CD14-positive monocyte (primary cell): ENCODE measurements at regions of chr1 and their contacts with region 1.

Region 1: GRCh38 chr1:66396212-66396890 is 137.6 kb upstream of the SGIP1 start:
- DNase-seq: peak; percentile 78 to 92 (median 89)
- H3K4me3 ChIP-seq: peak overlapping the region in 1 of 3 experiments; percentile 47
- H3K4me3 Mint-ChIP-seq: peak overlapping the region; percentile 51 to 85
- H3K27ac ChIP-seq: peak overlapping the region; percentile 81 to 94
- H3K27ac Mint-ChIP-seq: peak overlapping the region; percentile 92 to 100 (median 99)
- H3K4me1 ChIP-seq: peaks cover 61 to 64% of the 10 kb centered on the region in 2 donors
- H3K4me1 Mint-ChIP-seq: peaks cover 74% of the 10 kb centered on the region
- H3K27me3 ChIP-seq: no peaks in the 10 kb centered on the region
- H3K27me3 Mint-ChIP-seq: no peaks in the 10 kb centered on the region
- CTCF ChIP-seq: no peak

Region 2: DNA sequence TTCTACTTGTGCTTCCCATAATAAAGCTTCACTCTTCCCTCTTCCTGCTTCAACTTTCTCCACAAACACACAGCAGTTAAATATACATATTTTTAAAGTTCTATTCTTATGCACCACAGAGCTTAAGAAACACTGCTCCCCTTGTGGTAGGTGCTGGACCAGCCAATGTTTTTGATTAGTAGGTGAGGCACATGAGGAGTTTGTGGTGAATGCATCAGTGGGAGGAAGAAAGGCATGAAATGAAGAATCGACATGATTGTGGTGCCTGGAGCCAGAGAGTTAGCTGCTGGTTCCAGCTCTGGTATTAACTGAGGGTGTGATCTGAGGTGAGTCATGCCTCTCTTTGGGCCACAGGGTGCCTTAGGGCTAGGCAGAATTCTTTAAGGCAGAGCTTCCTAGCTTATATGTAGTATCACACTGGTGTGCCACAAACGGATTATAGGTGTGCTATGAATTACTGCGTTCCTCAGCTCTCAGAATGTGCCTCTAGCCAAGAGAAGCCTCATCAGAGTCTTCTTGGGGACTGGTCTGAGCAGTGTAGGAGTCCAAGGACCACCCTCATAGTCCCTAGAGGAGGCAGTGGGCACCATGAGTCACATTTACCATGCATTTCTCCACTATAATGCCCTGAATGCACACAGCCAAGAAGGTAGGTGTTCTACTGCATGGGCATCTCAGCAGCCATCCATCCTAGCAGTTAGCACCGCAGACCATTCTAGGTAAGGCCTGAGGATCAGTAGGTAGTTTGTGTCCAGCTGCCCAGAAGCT is 40.2 kb after region 1 on chr1:
- intact Hi-C with region 1: loop called (anchors 2 to 5 kb)
- DNase-seq: peak in 2 of 3 donors; percentile 19 to 60
- H3K4me3 ChIP-seq: no peak overlapping the region
- H3K4me3 Mint-ChIP-seq: no peak overlapping the region
- H3K27ac ChIP-seq: no peak overlapping the region
- H3K27ac Mint-ChIP-seq: peak overlapping the region in 5 of 7 donors; percentile 20 to 76 (median 58)
- H3K4me1 ChIP-seq: peaks cover 31 to 40% of the 10 kb centered on the region in 2 donors
- H3K4me1 Mint-ChIP-seq: peaks cover 37% of the 10 kb centered on the region
- H3K27me3 ChIP-seq: no peaks in the 10 kb centered on the region
- H3K27me3 Mint-ChIP-seq: no peaks in the 10 kb centered on the region
- CTCF ChIP-seq: peak; percentile 16

Region 3: DNA sequence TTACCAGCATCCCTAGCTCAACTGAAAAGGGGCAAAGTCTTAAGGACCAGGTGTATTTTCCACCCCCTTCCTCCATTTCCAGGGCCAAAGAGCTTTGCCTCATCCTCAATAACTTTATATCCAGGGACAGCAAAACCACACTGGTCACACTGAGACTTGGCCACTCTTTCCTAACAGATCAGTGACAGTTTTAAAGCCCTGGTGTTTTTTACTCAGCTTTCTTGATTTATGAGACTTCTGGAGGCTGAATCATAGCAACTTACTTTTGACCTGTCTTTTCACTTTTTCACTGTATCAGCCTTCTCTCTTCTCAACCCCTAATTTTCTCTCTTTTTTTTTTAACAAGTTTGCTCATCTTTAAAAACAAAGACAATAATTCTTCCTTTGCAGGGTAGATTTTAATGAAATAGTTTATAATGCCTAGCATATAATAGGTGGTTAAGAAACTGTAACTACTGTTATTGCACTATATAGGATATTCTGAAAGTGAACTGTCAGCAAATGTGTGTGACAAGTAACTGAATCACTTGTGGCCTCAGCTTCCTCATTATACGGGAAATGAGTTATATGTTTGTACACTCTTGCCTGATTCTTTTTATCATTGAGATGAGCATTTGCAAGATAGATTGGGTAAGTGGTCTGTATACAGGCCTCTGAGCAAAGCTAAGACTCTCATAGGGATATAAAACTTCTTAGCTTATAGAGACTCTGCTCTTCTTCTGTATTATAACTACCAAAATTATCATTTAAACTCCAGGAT is 336.2 kb after region 1 on chr1:
- intact Hi-C with region 1: loop called in 1 of 2 experiments (anchors 5 kb)
- DNase-seq: peak; percentile 61 to 89 (median 85)
- H3K4me3 ChIP-seq: no peak overlapping the region
- H3K4me3 Mint-ChIP-seq: no peak overlapping the region
- H3K27ac ChIP-seq: peak overlapping the region in 1 of 2 donors; percentile 69
- H3K27ac Mint-ChIP-seq: peak overlapping the region; percentile 79 to 98 (median 92)
- H3K4me1 ChIP-seq: peaks cover 12 to 17% of the 10 kb centered on the region in 2 donors
- H3K4me1 Mint-ChIP-seq: peaks cover 26% of the 10 kb centered on the region
- H3K27me3 ChIP-seq: no peaks in the 10 kb centered on the region
- H3K27me3 Mint-ChIP-seq: peaks cover 0 to 2% (median 0%) of the 10 kb centered on the region in 3 donors
- CTCF ChIP-seq: no peak